ENCODE measurements at regions of chr2 and their contacts with region 1.

Region 1: DNA sequence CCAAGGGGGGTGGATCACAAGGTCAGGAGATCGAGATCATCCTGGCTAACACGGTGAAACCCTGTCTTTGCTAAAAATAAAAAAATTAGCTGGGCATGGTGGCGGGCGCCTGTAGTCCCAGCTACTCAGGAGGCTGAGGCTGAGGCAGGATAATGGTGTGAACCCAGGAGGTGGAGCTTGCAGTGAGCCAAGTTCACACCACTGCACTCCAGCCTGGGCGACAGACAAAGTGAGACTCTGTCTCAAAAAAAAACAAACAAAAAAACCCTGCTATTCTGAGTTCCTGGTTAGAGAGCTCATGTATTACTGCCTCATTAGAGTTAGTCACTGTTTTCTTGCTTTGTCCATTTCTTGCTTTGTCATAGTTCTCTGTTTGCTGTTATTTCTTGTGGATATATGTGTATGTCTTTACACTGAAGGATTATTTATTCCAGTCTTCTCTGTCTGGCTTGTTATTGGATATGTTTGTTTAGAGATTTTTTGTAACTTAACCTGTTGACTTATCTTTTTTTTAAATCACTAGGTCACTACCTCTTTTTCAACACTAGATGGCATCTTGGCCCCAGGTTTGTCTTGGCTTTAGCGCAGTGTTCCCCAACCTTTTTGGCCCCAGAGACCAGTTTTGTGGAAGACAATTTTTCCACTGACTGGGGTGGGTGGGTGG is 17.0 kb downstream of the TTLL4 start:
- DNase-seq: no peak
- H3K4me3 ChIP-seq: no peak overlapping the region
- H3K4me1 ChIP-seq: peaks cover 1% of the 10 kb centered on the region; the same call in 1 of the 2 replicates
- H3K27me3 ChIP-seq: no peaks in the 10 kb centered on the region

Region 2: DNA sequence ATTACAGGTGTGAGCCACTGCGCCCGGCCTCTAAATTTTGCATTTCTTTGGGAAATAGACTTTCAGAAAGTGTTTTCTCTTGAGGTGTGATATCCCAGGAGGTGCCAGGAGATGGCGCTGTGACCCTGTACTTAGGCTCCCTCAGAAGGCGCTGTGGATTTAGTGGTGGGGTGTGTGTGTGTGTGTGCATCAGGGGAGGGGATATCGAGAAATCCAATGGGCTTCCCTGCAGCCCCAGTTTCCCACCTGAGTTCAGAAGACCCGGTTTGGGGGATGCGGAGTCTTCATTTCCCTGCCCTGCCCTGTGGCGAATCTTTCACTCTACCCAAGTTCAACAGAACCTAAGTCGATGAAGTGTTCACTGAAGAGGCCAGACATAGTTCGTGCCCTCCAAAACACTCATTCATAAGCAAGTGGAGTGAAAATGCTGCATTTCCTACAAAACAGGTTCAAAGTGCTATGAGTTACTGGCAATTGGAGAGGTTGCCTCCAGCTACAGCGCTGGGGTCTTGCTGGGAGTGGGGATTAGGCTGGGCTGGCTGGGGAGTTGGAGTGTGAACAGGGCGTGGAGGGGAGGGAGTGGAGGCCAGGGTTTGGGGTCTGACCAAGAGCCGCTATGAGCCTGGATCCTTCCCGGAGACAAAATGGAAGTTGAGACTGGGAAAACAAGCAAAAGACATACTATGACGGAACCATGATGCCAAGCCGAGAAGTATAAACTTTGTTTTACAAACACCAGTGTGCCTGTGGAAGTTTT is 125.5 kb after region 1 on chr2:
- in situ Hi-C with region 1: loop called (anchors 5 kb)
- DNase-seq: peak; percentile 37 to 81
- H3K4me3 ChIP-seq: no peak overlapping the region
- H3K4me1 ChIP-seq: no peaks in the 10 kb centered on the region
- H3K27me3 ChIP-seq: peaks cover 16% of the 10 kb centered on the region

Region 3: DNA sequence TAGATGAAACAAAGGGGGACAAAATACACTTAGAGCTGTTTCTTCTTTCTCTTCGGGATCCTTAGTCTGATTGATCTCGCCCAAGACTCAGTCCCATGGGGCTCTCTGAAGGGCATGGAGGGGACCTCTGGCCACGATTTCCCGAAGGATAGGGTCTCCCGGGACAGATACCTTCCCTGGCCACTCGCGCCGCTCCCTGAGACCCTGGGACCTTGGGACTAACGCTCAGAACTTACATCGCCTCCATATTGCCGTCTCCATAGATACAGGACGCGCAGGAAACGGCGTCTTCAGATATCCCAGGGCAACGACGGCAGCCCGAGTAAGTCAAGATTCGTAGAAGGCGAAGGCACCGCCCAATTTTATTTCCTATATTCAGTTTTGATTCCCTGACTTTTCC is 313.6 kb after region 1 on chr2 and contains the start of gene CFAP65:
- in situ Hi-C with region 1: no loop called
- DNase-seq: no peak
- H3K4me3 ChIP-seq: no peak within 1 kb of the TSS
- H3K4me1 ChIP-seq: no peaks in the 10 kb centered on the region
- H3K27me3 ChIP-seq: peaks cover 49% of the 10 kb centered on the region

Region 4: DNA sequence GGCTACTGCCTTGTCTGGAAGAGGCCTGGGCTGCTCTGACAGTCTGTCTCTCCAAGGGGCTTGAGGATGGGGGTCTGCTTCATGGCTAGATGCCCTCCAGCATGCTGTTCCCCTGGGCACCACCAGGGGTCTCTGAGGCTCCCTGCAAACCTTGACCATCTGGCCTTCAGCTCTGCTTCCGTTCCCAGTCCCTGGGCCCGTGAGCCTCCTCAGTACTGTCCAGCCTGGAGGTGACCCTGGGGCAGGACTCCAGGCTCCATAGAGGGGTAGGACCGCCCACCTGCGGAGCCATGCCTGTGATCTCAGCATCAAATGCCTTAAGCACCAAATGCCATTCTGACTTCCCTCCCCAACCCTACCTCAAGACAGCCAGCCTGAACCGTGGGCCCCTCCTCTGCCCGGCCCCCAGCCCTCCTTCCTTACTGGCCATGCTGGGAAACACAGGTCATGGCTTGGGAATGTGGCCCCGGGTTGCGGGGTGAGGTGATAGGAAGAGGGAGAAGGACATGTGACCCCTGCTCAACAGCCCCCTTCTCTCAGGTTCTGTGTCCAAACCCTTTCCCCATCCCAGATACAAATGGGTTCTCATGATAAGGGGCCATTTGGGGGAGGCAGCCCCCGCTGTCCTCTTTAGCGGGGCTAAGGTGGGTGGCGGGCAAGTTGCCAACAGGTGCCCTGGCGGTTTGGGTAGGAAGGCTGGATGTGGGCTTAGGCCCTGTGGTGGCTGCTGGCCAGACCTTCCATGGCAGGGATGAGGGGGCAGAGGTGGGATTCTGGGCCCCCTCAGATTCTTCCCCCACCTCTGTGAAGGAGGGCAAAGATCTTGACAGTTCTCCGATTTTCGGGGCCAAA is 732.1 kb after region 1 on chr2:
- in situ Hi-C with region 1: no loop called
- DNase-seq: peak; percentile 23 to 82
- H3K4me3 ChIP-seq: no peak overlapping the region
- H3K4me1 ChIP-seq: no peaks in the 10 kb centered on the region
- H3K27me3 ChIP-seq: no peaks in the 10 kb centered on the region

Measured in HAP-1 (cell line).